CD4-positive, alpha-beta T cell (primary cell): ENCODE measurements at regions of chr22 and their contacts with region 1.

Region 1: DNA sequence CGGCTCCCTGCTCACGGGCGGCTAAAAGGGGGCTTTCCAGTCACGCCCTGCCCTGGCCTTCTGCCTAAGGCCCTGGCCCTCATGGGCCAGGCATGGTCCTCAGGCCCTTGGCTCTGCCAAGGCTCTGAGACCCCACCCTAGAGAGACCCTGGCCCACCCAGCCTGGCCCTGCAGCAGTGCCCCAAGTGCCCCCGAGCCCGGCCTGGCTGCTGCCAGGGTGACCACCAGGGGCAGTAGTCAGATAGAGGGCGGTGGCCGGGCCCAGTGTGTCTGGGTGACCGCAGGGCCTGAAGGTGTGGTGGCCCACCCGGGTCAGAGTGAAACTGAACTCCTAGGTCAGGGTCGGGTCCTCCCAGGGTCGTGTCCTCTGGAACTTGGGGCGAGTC is 29.4 kb upstream of the CCDC188 start:
- DNase-seq: no peak
- ATAC-seq: no peak
- H3K4me3 ChIP-seq: no peak overlapping the region
- H3K4me3 Mint-ChIP-seq: no peak overlapping the region
- H3K27ac ChIP-seq: no peak overlapping the region
- H3K27ac Mint-ChIP-seq: no peak overlapping the region
- H3K4me1 ChIP-seq: no peaks in the 10 kb centered on the region
- H3K4me1 Mint-ChIP-seq: no peaks in the 10 kb centered on the region
- H3K27me3 ChIP-seq: no peaks in the 10 kb centered on the region
- H3K27me3 Mint-ChIP-seq: no peaks in the 10 kb centered on the region
- CTCF ChIP-seq: no peak

Region 2: GRCh38 chr22:20102203-20102780 is 77.9 kb before region 1 on chr22:
- CTCF ChIA-PET with region 1: no interaction called
- POLR2A ChIA-PET with region 1: no interaction called
- intact Hi-C with region 1: no loop called
- DNase-seq: no peak
- ATAC-seq: no peak
- H3K4me3 ChIP-seq: no peak overlapping the region
- H3K4me3 Mint-ChIP-seq: no peak overlapping the region
- H3K27ac ChIP-seq: peak overlapping the region in 1 of 2 donors; percentile 51
- H3K27ac Mint-ChIP-seq: peak overlapping the region; percentile 96
- H3K4me1 ChIP-seq: peaks cover 32% of the 10 kb centered on the region
- H3K4me1 Mint-ChIP-seq: peaks cover 60% of the 10 kb centered on the region
- H3K27me3 ChIP-seq: no peaks in the 10 kb centered on the region
- H3K27me3 Mint-ChIP-seq: no peaks in the 10 kb centered on the region
- CTCF ChIP-seq: no peak

Region 3: GRCh38 chr22:20219667-20220628 is 39.7 kb after region 1 on chr22:
- CTCF ChIA-PET with region 1: no interaction called
- POLR2A ChIA-PET with region 1: no interaction called
- intact Hi-C with region 1: loop called in 1 of 2 experiments (anchors 5 kb)
- DNase-seq: no peak
- ATAC-seq: no peak
- H3K4me3 ChIP-seq: no peak overlapping the region
- H3K4me3 Mint-ChIP-seq: no peak overlapping the region
- H3K27ac ChIP-seq: no peak overlapping the region
- H3K27ac Mint-ChIP-seq: no peak overlapping the region
- H3K4me1 ChIP-seq: no peaks in the 10 kb centered on the region
- H3K4me1 Mint-ChIP-seq: no peaks in the 10 kb centered on the region
- H3K27me3 ChIP-seq: no peaks in the 10 kb centered on the region
- H3K27me3 Mint-ChIP-seq: no peaks in the 10 kb centered on the region
- CTCF ChIP-seq: no peak